Aorta (tissue), 5 donors: ENCODE measurements at regions of chr5 and their contacts with region 1.

Region 1: DNA sequence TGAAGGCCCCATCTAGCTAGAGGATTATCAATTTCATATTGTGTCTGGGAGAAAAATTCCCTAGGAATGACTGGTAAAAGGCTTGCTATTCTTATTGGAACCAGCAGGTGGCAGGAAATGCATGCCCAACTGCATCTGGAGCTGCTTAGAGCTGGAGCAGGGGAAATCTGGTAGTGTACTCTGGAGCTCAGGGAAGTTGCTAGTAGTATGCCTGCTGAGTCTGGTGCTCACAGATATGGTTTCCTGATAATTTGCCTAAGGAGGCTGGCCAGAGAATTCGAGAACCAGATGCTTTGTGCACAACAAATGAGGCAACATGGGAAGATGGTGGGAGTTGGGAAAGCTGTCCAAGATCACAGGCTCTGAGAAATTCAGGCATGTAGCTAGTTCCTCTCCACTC is 53.7 kb downstream of the G3BP1 start:
- DNase-seq: no peak
- ATAC-seq: peak; percentile 76
- H3K4me3 ChIP-seq: no peak overlapping the region
- H3K27ac ChIP-seq: no peak overlapping the region
- H3K4me1 ChIP-seq: no peaks in the 10 kb centered on the region
- H3K27me3 ChIP-seq: no peaks in the 10 kb centered on the region

Region 2: GRCh38 chr5:152142840-152143469 is 317.5 kb after region 1 on chr5:
- intact Hi-C with region 1: loop called (anchors 1 to 2 kb)
- DNase-seq: peak; percentile 59 to 81
- ATAC-seq: peak; percentile 73
- H3K4me3 ChIP-seq: no peak overlapping the region
- H3K27ac ChIP-seq: no peak overlapping the region
- H3K4me1 ChIP-seq: no peaks in the 10 kb centered on the region
- H3K27me3 ChIP-seq: no peaks in the 10 kb centered on the region

Region 3: DNA sequence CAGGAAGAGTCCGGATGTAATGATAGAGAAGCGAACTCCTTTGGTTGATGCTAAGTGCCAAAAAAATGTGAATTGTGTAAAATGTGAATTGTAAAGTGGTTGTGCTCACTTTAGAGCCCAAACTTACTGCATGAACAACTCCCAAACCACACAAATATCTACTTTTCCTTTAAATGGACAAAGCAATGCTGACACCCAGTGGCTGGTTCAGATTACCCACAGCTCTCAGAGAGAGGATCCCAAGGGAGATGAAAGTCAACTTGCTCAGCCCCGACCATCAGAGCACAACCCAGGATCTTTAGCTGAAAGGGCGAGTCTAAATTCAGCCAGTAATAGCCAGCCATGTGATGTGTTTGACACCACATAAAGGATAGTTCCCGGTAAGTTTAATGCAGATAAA is 446.0 kb after region 1 on chr5:
- intact Hi-C with region 1: loop called (anchors 2 to 5 kb)
- DNase-seq: no peak
- ATAC-seq: no peak
- H3K4me3 ChIP-seq: no peak overlapping the region
- H3K27ac ChIP-seq: no peak overlapping the region
- H3K4me1 ChIP-seq: peaks cover 0 to 7% of the 10 kb centered on the region in 2 donors
- H3K27me3 ChIP-seq: no peaks in the 10 kb centered on the region

Region 4: DNA sequence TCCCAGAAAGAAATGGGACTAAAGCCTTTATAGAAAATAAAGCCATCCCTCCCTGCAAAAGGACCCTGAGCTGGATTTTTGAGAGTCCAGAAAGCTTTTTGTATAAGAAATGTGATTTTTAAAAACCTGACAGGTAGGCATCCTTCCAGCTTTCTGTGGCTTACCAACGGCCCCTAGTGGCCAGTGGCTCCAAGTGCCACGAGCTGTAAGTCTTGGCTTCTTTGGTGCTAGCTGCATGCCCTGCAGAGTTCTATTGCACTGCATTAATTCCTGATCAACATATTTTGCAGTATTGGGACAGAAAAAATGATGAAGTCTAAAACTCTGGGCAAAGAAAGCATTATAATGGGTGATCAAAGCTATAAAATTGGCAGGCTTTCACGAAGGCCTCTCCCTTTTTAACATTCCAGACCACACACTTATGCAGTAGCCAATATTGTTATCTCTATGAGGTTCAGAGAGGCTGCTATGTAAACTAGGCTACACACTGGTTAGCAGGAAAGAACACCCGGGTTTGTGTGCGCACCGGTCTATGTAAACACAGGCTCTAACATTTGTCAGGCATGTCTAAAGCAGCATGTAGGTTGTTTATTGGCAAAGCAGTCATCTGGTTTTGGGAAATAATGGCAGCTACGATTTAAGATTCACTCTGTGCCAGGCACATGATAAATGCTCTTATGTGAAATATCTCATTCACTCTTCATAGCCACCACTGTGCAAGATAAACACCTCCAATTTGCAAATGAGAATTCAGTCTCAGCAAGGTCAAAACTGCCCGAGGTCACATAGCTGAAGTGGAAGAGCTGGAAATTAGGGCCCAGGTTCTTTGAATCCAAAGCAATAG is 524.5 kb after region 1 on chr5:
- intact Hi-C with region 1: loop called (anchors 5 to 10 kb)
- DNase-seq: peak; percentile 40 to 73
- ATAC-seq: no peak
- H3K4me3 ChIP-seq: no peak overlapping the region
- H3K27ac ChIP-seq: no peak overlapping the region
- H3K4me1 ChIP-seq: no peaks in the 10 kb centered on the region
- H3K27me3 ChIP-seq: no peaks in the 10 kb centered on the region

Region 5: GRCh38 chr5:152505442-152506042 is 680.1 kb after region 1 on chr5:
- intact Hi-C with region 1: loop called (anchors 10 kb)
- DNase-seq: peak in 1 of 2 donors; percentile 46
- ATAC-seq: peak; percentile 43
- H3K4me3 ChIP-seq: no peak overlapping the region
- H3K27ac ChIP-seq: no peak overlapping the region
- H3K4me1 ChIP-seq: peaks cover 0 to 1% of the 10 kb centered on the region in 2 donors
- H3K27me3 ChIP-seq: no peaks in the 10 kb centered on the region